Left ventricle myocardium inferior (tissue), 1 donor: ENCODE measurements at regions of chr11 and their contacts with region 1.

Region 1: GRCh38 chr11:31487848-31488247 is 21.6 kb downstream of the IMMP1L start:
- DNase-seq: no peak
- H3K4me3 ChIP-seq: no peak overlapping the region
- H3K27ac ChIP-seq: no peak overlapping the region
- H3K4me1 ChIP-seq: peaks cover 12% of the 10 kb centered on the region
- H3K27me3 ChIP-seq: no peaks in the 10 kb centered on the region
- CTCF ChIP-seq: peak; percentile 52

Region 2: DNA sequence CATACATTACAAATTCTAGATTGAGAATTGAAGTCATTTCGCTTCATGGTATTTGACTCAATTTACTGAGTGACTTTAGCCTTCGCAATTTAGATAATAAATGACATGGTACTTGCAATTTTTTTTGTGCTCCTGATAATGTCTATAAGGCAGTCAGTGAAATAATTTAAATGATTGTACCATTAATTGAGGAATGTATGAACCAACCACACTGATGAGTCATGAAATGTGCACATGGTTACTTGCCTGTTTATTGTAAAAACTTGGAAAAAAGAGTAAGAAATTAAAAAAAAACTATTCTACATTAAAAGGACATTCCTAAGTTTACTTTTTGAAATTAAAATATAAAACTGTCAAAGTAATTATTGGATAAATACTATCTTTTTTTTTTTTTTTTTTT is 74.9 kb before region 1 on chr11:
- intact Hi-C with region 1: no loop called
- DNase-seq: no peak
- H3K4me3 ChIP-seq: no peak overlapping the region
- H3K27ac ChIP-seq: no peak overlapping the region
- H3K4me1 ChIP-seq: no peaks in the 10 kb centered on the region
- H3K27me3 ChIP-seq: no peaks in the 10 kb centered on the region
- CTCF ChIP-seq: no peak

Region 3: GRCh38 chr11:31437742-31438435 is 50.0 kb before region 1 on chr11:
- intact Hi-C with region 1: no loop called
- DNase-seq: no peak
- H3K4me3 ChIP-seq: no peak overlapping the region
- H3K27ac ChIP-seq: no peak overlapping the region
- H3K4me1 ChIP-seq: no peaks in the 10 kb centered on the region
- H3K27me3 ChIP-seq: no peaks in the 10 kb centered on the region
- CTCF ChIP-seq: no peak

Region 4: GRCh38 chr11:31768749-31769640 is 281.1 kb after region 1 on chr11:
- intact Hi-C with region 1: no loop called
- DNase-seq: no peak
- H3K4me3 ChIP-seq: no peak overlapping the region
- H3K27ac ChIP-seq: no peak overlapping the region
- H3K4me1 ChIP-seq: no peaks in the 10 kb centered on the region
- H3K27me3 ChIP-seq: peaks cover 5% of the 10 kb centered on the region
- CTCF ChIP-seq: no peak

Region 5: GRCh38 chr11:31865606-31866300 is 377.9 kb after region 1 on chr11:
- intact Hi-C with region 1: loop called (anchors 10 kb)
- DNase-seq: no peak
- H3K4me3 ChIP-seq: no peak overlapping the region
- H3K27ac ChIP-seq: no peak overlapping the region
- H3K4me1 ChIP-seq: no peaks in the 10 kb centered on the region
- H3K27me3 ChIP-seq: peaks cover 84% of the 10 kb centered on the region
- CTCF ChIP-seq: no peak